ENCODE measurements at regions of chr10 and their contacts with region 1.

Region 1: DNA sequence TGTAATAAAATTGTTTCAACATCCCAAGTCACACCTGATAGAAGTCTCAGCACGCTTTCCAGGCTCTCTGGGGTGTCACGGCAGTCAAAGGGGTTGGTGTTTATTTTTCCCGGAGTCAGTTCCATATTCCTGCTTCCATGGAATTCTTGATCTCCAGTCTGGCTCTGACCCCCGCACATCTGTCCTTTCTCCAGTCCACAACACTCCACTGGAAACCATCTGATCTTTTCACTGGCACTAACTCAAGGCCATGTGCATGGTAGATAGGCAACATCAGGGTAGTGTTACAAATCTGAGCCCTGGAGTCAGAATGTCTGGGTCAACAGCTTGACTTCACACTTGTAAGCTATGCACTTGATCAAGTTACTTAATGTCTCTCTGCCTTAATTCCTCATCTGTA is 176.2 kb downstream of the WDR11 start:
- DNase-seq: no peak
- H3K4me3 ChIP-seq: no peak overlapping the region
- H3K27ac ChIP-seq: peak overlapping the region in 2 of 4 donors; percentile 42 to 57
- H3K4me1 ChIP-seq: peaks cover 0 to 8% (median 0%) of the 10 kb centered on the region in 4 donors
- H3K27me3 ChIP-seq: no peaks in the 10 kb centered on the region
- CTCF ChIP-seq: no peak
- EP300 ChIP-seq: no peak
- POLR2A ChIP-seq: no peak

Region 2: DNA sequence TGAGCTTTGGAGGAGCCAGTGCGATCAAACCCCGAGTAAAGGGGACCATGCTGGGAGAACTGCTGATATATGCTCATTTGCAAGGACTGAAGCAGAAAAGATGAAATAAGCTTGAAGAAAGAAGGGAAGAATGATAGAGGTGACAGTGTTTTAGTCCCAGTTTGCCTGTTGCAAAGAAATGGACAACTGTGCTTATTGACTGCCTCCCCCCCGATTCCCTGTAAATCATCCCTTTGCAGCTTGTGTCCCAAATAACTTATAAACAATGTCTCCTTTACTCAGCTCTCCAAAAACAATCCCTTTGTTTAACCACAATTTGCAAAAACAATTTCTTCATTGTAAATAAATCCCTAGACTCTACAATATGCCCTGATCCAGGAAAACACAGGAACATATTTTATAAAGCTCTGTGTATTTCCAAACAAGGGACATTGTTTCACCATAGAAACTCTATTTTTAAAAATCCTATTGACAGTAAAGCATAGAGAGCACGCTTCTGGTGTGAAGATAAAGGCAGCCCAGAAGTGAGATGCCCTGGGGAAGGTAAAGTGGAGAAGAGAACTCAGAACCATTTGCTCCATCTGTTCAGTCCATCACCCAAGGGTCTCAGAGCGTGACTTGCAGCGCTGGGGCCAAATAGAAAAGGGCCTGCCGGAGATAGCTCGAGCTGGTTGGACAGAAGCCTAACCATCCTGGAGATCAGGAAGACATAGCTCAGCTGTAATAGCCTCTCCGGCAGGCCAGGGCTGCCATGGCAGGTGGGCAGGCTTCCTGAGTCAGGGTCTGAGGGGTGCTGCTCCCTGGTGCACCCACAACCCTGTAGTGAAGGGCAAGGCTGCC is 104.3 kb after region 1 on chr10:
- in situ Hi-C with region 1: no loop called
- intact Hi-C with region 1: loop called (anchors 2 kb)
- DNase-seq: no peak
- H3K4me3 ChIP-seq: no peak overlapping the region
- H3K27ac ChIP-seq: no peak overlapping the region
- H3K4me1 ChIP-seq: no peaks in the 10 kb centered on the region
- H3K27me3 ChIP-seq: no peaks in the 10 kb centered on the region
- CTCF ChIP-seq: no peak
- EP300 ChIP-seq: no peak
- POLR2A ChIP-seq: no peak

Region 3: GRCh38 chr10:121284936-121285335 is 257.6 kb after region 1 on chr10:
- in situ Hi-C with region 1: no loop called
- intact Hi-C with region 1: no loop called
- DNase-seq: no peak
- H3K4me3 ChIP-seq: no peak overlapping the region
- H3K27ac ChIP-seq: peak overlapping the region; percentile 44 to 77 (median 64)
- H3K4me1 ChIP-seq: peaks cover 0 to 72% (median 22%) of the 10 kb centered on the region in 4 donors
- H3K27me3 ChIP-seq: no peaks in the 10 kb centered on the region
- CTCF ChIP-seq: no peak
- EP300 ChIP-seq: no peak
- POLR2A ChIP-seq: no peak

Region 4: GRCh38 chr10:121324678-121325213 is 297.4 kb after region 1 on chr10:
- in situ Hi-C with region 1: no loop called
- intact Hi-C with region 1: no loop called
- DNase-seq: peak; percentile 28
- H3K4me3 ChIP-seq: no peak overlapping the region
- H3K27ac ChIP-seq: peak overlapping the region in 3 of 4 donors; percentile 17 to 60 (median 59)
- H3K4me1 ChIP-seq: peaks cover 0 to 16% (median 7%) of the 10 kb centered on the region in 4 donors
- H3K27me3 ChIP-seq: no peaks in the 10 kb centered on the region
- CTCF ChIP-seq: no peak
- EP300 ChIP-seq: no peak
- POLR2A ChIP-seq: no peak

Region 5: GRCh38 chr10:121845044-121845784 is 817.8 kb after region 1 on chr10:
- in situ Hi-C with region 1: no loop called
- intact Hi-C with region 1: no loop called
- DNase-seq: no peak
- H3K4me3 ChIP-seq: no peak overlapping the region
- H3K27ac ChIP-seq: no peak overlapping the region
- H3K4me1 ChIP-seq: peaks cover 0 to 6% (median 0%) of the 10 kb centered on the region in 4 donors
- H3K27me3 ChIP-seq: no peaks in the 10 kb centered on the region
- CTCF ChIP-seq: no peak
- EP300 ChIP-seq: no peak
- POLR2A ChIP-seq: no peak